Common myeloid progenitor, CD34-positive (primary cell): ENCODE measurements at regions of chr22 and their contacts with region 1.

Region 1: GRCh38 chr22:32411829-32412592 is at the start of gene RTCB:
- DNase-seq: peak; percentile 92 to 95 (median 94)
- H3K4me3 ChIP-seq: peak within 1 kb of the TSS; percentile 84 to 99 (median 97)
- H3K27ac ChIP-seq: peak within 1 kb of the TSS; percentile 71 to 87
- H3K4me1 ChIP-seq: peaks cover 11 to 25% (median 16%) of the 10 kb centered on the region in 4 experiments
- H3K27me3 ChIP-seq: peaks cover 0 to 2% (median 0%) of the 10 kb centered on the region in 5 experiments

Region 2: GRCh38 chr22:32389685-32390084 is 22.3 kb before region 1 on chr22:
- CTCF ChIA-PET with region 1: interaction called, 13 read pairs
- POLR2A ChIA-PET with region 1: no interaction called
- DNase-seq: peak in 2 of 3 donors; percentile 33 to 37
- H3K4me3 ChIP-seq: no peak overlapping the region
- H3K27ac ChIP-seq: no peak overlapping the region
- H3K4me1 ChIP-seq: no peaks in the 10 kb centered on the region
- H3K27me3 ChIP-seq: no peaks in the 10 kb centered on the region

Region 3: GRCh38 chr22:32474635-32475467 is 62.8 kb after region 1 on chr22 and contains the start of gene FBXO7:
- CTCF ChIA-PET with region 1: interaction called, 13 read pairs
- POLR2A ChIA-PET with region 1: no interaction called
- DNase-seq: peak; percentile 89 to 94 (median 92)
- H3K4me3 ChIP-seq: peak within 1 kb of the TSS; percentile 87 to 99 (median 96)
- H3K27ac ChIP-seq: peak within 1 kb of the TSS; percentile 89 to 93
- H3K4me1 ChIP-seq: peaks cover 11 to 21% (median 18%) of the 10 kb centered on the region in 4 experiments
- H3K27me3 ChIP-seq: peaks cover 0 to 3% (median 0%) of the 10 kb centered on the region in 5 experiments